ENCODE measurements at regions of chr3 and their contacts with region 1.

Region 1: GRCh38 chr3:18679238-18679637 is 254.1 kb upstream of the SATB1 start:
- DNase-seq: peak; percentile 77
- H3K4me3 Mint-ChIP-seq: peak overlapping the region; percentile 31
- H3K27ac Mint-ChIP-seq: peak overlapping the region; percentile 81
- H3K4me1 Mint-ChIP-seq: peaks cover 81% of the 10 kb centered on the region
- H3K27me3 Mint-ChIP-seq: no peaks in the 10 kb centered on the region

Region 2: GRCh38 chr3:18258492-18258891 is 420.7 kb before region 1 on chr3:
- CTCF ChIA-PET with region 1: no interaction called
- intact Hi-C with region 1: no loop called
- DNase-seq: no peak
- H3K4me3 Mint-ChIP-seq: no peak overlapping the region
- H3K27ac Mint-ChIP-seq: no peak overlapping the region
- H3K4me1 Mint-ChIP-seq: no peaks in the 10 kb centered on the region
- H3K27me3 Mint-ChIP-seq: peaks cover 3% of the 10 kb centered on the region

Region 3: GRCh38 chr3:18438586-18438985 is 240.7 kb before region 1 on chr3:
- CTCF ChIA-PET with region 1: no interaction called
- intact Hi-C with region 1: loop called (anchors 2 kb)
- DNase-seq: peak; percentile 83
- H3K4me3 Mint-ChIP-seq: peak overlapping the region; percentile 76
- H3K27ac Mint-ChIP-seq: peak overlapping the region; percentile 90
- H3K4me1 Mint-ChIP-seq: peaks cover 30% of the 10 kb centered on the region
- H3K27me3 Mint-ChIP-seq: no peaks in the 10 kb centered on the region

Region 4: GRCh38 chr3:18618723-18619122 is 60.5 kb before region 1 on chr3:
- CTCF ChIA-PET with region 1: no interaction called
- intact Hi-C with region 1: no loop called
- DNase-seq: no peak
- H3K4me3 Mint-ChIP-seq: no peak overlapping the region
- H3K27ac Mint-ChIP-seq: no peak overlapping the region
- H3K4me1 Mint-ChIP-seq: peaks cover 3% of the 10 kb centered on the region
- H3K27me3 Mint-ChIP-seq: no peaks in the 10 kb centered on the region

Region 5: DNA sequence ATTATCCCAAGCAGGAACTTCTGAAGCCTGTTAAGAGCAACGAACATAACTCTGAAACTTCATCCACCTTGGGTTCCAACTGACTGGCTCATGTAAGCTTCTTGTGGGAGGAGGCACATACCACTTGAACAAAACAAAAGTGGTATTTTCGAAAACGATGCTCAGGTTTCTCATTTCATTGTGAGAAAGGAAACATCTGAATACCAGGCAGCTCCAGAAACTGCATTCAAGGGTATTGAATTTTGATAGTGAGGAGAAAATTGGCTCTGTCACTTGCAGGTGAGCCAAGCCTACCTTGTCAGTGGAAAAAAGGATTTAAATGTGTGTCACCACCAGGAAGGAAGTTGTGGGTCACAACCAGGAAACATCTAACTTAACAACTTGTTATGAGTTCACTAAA is 36.0 kb before region 1 on chr3:
- CTCF ChIA-PET with region 1: interaction called, 4 read pairs
- intact Hi-C with region 1: loop called (anchors 1 kb)
- DNase-seq: peak; percentile 36
- H3K4me3 Mint-ChIP-seq: no peak overlapping the region
- H3K27ac Mint-ChIP-seq: peak overlapping the region; percentile 69
- H3K4me1 Mint-ChIP-seq: peaks cover 60% of the 10 kb centered on the region
- H3K27me3 Mint-ChIP-seq: no peaks in the 10 kb centered on the region

Region 6: DNA sequence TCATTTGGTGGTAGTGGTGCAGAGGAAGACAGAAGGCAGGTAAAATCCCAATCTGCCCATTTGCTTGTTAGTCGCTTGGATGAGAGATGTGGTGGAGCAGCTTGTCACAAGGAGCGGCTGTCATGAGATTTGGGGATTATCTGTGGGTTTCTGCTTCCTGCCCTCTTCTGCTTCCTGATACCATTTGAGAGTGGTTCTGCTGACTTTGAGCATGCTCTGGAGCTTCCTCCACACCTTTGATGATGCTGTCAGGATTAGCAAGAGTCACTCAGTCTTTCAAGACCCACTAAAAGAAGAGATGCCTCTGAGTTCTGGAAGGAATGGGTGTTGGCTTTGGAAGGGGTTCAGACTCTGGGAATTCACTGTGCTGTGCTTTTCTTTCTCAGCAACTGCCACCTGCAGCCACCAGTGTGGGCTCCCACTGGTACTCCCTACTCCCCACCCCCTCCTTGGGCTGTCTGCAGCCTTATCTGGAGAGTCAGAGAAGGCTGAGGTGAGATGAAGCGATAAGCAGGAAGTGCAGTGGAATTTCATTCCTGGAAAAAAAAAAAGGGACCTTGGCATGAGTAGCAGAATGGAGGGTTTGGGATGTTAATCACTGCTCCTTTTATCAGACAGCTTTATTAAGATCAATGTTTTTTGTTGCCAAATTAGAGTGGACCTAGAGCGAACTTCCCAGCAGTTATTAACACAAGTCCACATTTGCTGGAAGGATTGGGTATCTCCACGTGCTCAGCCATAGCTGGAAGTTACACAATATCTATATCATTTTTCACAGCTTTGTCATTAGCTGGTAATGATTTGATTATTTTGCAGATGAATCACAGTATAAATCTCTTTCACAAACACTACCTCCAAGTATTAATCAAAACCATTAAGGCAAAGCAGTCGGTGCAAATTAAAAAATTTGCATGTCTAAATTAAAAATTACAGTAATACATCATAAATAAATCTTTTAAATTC is 21.1 kb before region 1 on chr3:
- CTCF ChIA-PET with region 1: interaction called, 6 read pairs
- intact Hi-C with region 1: loop called (anchors 1 kb)
- DNase-seq: peak; percentile 64
- H3K4me3 Mint-ChIP-seq: peak overlapping the region; percentile 46
- H3K27ac Mint-ChIP-seq: peak overlapping the region; percentile 62
- H3K4me1 Mint-ChIP-seq: peaks cover 55% of the 10 kb centered on the region
- H3K27me3 Mint-ChIP-seq: no peaks in the 10 kb centered on the region

Region 7: GRCh38 chr3:18725668-18726407 is 46.6 kb after region 1 on chr3:
- CTCF ChIA-PET with region 1: interaction called, 10 read pairs
- intact Hi-C with region 1: loop called (anchors 1 kb)
- DNase-seq: peak; percentile 50
- H3K4me3 Mint-ChIP-seq: peak overlapping the region; percentile 54
- H3K27ac Mint-ChIP-seq: peak overlapping the region; percentile 86
- H3K4me1 Mint-ChIP-seq: peaks cover 71% of the 10 kb centered on the region
- H3K27me3 Mint-ChIP-seq: no peaks in the 10 kb centered on the region

Region 8: DNA sequence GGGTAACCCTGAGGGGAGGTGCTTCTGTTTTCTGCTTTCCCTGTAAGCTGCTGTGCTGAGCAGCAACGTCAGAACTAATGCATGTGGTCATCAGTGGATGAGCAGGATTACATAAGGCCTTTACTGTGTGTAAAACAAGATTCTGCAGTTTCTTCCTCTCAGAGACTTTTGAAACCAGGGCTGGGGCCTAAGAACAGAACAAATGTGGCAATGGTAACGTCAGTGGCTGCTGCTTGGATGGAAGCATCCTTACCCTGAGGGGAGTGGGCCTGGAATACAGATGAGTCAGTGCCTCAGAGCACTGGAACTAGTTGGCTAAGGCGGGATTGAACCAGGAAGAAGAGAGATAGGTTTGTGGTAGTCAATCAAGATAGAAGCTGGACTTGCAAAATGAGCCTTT is 288.9 kb after region 1 on chr3:
- CTCF ChIA-PET with region 1: no interaction called
- intact Hi-C with region 1: no loop called
- DNase-seq: no peak
- H3K4me3 Mint-ChIP-seq: no peak overlapping the region
- H3K27ac Mint-ChIP-seq: no peak overlapping the region
- H3K4me1 Mint-ChIP-seq: no peaks in the 10 kb centered on the region
- H3K27me3 Mint-ChIP-seq: peaks cover 2% of the 10 kb centered on the region

Measured in activated naive CD4-positive, alpha-beta T cell treated with anti-CD3 and anti-CD28 coated beads for 36 hours (primary cell).